Activated naive CD4-positive, alpha-beta T cell treated with anti-CD3 and anti-CD28 coated beads for 36 hours (primary cell): ENCODE measurements at regions of chr5 and their contacts with region 1.

Region 1: GRCh38 chr5:138654281-138654867 is 79.2 kb upstream of the HSPA9 start:
- DNase-seq: peak; percentile 85
- H3K4me3 Mint-ChIP-seq: no peak overlapping the region
- H3K27ac Mint-ChIP-seq: peak overlapping the region; percentile 31
- H3K4me1 Mint-ChIP-seq: peaks cover 19% of the 10 kb centered on the region
- H3K27me3 Mint-ChIP-seq: peaks cover 78% of the 10 kb centered on the region

Region 2: DNA sequence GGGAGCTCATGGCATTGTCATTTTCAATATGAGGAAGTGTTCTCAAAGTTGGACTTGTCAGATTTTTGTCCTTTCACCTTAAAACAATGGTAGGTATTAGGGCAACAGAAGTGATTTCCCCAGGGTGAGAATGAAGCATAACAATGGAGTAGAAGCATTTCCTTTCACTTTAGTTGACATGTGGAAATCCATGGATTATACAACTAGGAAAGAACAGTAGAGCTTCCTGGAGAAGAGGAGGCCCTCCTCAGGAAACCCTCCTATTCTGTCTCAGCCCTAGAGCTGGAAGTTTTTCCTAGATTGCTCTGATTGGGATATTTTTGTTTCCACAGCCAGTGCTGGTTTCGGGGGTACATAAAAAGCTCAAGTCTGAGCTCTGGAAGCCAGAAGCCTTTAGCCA is 229.3 kb before region 1 on chr5:
- CTCF ChIA-PET with region 1: no interaction called
- intact Hi-C with region 1: no loop called
- DNase-seq: no peak
- H3K4me3 Mint-ChIP-seq: no peak overlapping the region
- H3K27ac Mint-ChIP-seq: no peak overlapping the region
- H3K4me1 Mint-ChIP-seq: no peaks in the 10 kb centered on the region
- H3K27me3 Mint-ChIP-seq: no peaks in the 10 kb centered on the region

Region 3: DNA sequence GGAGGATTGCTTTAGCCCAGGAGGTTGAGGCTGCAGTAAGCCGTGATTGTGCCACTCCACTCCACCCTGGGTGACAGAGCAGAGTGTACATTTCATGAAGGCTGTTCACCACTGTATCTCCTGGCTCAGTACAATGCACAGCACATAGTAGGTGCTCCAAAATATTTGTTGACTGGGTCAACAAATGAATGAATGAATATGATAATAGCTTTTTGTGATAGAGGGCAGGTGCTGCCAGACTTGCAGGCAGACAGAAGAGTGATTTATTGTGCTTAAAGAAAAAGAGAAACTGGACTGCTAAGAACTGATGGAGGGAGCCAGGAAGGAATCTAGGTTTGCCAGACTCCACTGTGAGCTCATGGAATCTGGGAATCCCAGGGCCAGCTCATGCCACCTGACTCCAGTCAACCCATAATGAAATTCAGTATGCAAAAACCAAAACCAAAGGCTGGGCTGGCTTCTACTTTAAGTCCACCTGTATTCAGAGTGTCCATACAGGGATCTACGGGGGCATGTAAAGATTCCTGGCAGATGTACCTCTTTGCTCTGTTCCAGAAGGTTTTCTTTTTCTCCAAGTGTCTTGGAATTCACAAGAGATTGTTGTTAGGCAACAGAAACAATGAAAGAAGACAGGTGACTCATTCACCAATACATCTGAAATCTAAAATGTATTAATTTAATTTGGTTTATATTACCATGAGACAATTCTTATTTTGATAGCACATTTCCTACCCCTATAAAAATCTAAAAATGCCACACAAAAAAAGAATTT is 83.3 kb after region 1 on chr5:
- CTCF ChIA-PET with region 1: no interaction called
- intact Hi-C with region 1: loop called (anchors 1 kb)
- DNase-seq: no peak
- H3K4me3 Mint-ChIP-seq: no peak overlapping the region
- H3K27ac Mint-ChIP-seq: no peak overlapping the region
- H3K4me1 Mint-ChIP-seq: peaks cover 16% of the 10 kb centered on the region
- H3K27me3 Mint-ChIP-seq: peaks cover 17% of the 10 kb centered on the region

Region 4: DNA sequence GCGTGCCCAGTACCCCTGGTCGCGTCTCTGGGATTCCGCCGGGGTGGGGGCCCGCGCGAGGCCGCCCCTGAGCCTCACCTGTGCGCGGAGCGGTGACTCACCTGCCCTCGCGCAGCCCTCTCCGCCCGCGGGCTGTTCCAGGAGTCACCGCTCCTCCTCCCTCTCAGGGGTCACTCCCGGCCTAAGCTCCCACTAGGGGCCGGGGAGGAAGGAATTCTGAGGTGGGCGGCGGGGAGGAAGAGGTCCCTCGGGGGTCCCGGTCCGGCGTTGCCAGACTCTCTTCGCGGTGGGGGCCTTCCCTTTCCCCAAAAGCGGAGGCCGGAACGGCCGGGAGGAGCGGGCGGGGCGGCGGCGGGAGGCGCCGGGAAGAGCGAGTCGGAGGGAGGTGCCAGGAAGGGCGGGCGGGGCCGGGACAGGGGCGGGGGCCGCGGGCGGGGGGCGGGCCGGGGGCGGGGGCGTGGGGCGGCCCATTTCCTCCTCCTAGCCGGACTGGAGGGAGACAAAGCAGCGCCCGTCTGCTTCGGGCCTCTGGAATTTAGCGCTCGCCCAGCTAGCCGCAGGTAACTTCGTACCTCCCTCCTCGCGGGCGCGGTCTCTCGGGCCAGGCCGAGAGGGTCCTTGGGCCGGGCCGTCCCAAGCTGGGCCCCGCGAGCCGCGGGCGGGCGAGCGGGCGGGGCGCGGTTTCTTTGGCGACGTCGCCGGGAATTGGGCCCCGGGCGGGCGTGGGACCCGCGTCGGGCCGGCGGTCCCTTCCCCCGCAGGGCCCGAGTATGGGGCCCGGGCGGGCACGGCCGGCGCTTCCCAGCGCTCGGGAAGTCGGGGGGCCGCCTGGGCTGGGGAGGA is 98.8 kb after region 1 on chr5 and contains the start of gene CTNNA1:
- CTCF ChIA-PET with region 1: interaction called, 3 read pairs
- intact Hi-C with region 1: loop called (anchors 1 kb)
- DNase-seq: peak; percentile 48
- H3K4me3 Mint-ChIP-seq: peak within 1 kb of the TSS; percentile 74
- H3K27ac Mint-ChIP-seq: peak within 1 kb of the TSS; percentile 32
- H3K4me1 Mint-ChIP-seq: peaks cover 19% of the 10 kb centered on the region
- H3K27me3 Mint-ChIP-seq: peaks cover 48% of the 10 kb centered on the region
- total RNA-seq, gene CTNNA1: 36.8 to 43.0 TPM

Region 5: GRCh38 chr5:138874771-138875551 is 220.6 kb after region 1 on chr5 and contains the start of gene LRRTM2:
- CTCF ChIA-PET with region 1: no interaction called
- intact Hi-C with region 1: no loop called
- DNase-seq: peak; percentile 18
- H3K4me3 Mint-ChIP-seq: no peak within 1 kb of the TSS
- H3K27ac Mint-ChIP-seq: no peak within 1 kb of the TSS
- H3K4me1 Mint-ChIP-seq: peaks cover 13% of the 10 kb centered on the region
- H3K27me3 Mint-ChIP-seq: peaks cover 31% of the 10 kb centered on the region
- total RNA-seq, gene LRRTM2: not detected

Region 6: GRCh38 chr5:139246394-139246793 is 592.0 kb after region 1 on chr5:
- CTCF ChIA-PET with region 1: no interaction called
- intact Hi-C with region 1: loop called (anchors 5 kb)
- DNase-seq: peak; percentile 79
- H3K4me3 Mint-ChIP-seq: no peak overlapping the region
- H3K27ac Mint-ChIP-seq: peak overlapping the region; percentile 70
- H3K4me1 Mint-ChIP-seq: peaks cover 22% of the 10 kb centered on the region
- H3K27me3 Mint-ChIP-seq: no peaks in the 10 kb centered on the region

Region 7: GRCh38 chr5:139273572-139274289 is 619.4 kb after region 1 on chr5:
- CTCF ChIA-PET with region 1: no interaction called
- intact Hi-C with region 1: loop called (anchors 5 kb)
- DNase-seq: peak; percentile 91
- H3K4me3 Mint-ChIP-seq: peak overlapping the region; percentile 93
- H3K27ac Mint-ChIP-seq: peak overlapping the region; percentile 80
- H3K4me1 Mint-ChIP-seq: peaks cover 50% of the 10 kb centered on the region
- H3K27me3 Mint-ChIP-seq: no peaks in the 10 kb centered on the region

Region 8: GRCh38 chr5:139711067-139711905 is 1056.9 kb after region 1 on chr5:
- CTCF ChIA-PET with region 1: no interaction called
- intact Hi-C with region 1: no loop called
- DNase-seq: peak; percentile 66
- H3K4me3 Mint-ChIP-seq: peak overlapping the region; percentile 62
- H3K27ac Mint-ChIP-seq: no peak overlapping the region
- H3K4me1 Mint-ChIP-seq: peaks cover 10% of the 10 kb centered on the region
- H3K27me3 Mint-ChIP-seq: peaks cover 2% of the 10 kb centered on the region